ENCODE measurements at regions of chr11 and their contacts with region 1.

Region 1: DNA sequence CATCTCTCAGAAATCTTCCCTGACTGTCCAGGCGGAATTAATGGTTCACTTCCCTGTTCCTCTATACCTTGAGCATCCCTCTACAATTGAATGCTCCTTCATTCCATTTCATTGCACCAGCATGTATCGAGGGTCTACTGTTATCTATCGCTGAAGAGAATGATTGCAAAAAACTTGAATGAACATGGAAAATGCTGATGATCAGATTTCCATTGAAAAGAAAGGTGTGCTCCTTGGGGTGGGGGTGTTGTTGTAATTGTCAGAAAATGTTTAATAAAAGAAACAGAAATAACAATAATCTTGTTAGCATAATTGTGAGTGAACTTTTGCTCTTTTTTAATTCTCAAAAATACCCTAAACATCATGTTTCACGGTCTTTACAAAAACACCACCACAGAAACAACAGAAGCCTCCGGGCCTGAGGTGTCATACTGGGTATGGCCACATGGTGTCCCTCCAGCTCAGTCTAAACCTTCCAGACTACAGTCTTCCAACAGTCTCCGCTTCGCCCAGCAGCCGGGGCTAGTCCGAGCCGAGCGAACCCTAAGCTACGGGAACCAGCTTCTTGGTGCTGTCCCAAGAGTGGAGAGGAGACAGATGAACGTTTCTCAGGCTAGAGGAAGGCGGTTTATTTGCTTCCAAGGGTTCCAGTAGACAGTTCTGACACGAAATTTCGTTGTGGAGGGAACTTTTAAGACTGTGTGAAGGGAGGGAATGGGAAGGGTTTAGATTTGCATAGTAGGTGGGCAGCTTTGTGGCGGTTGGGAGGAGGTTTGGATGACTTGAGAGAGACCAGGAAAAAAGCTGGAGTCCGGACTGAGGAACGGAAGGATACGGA is 75.8 kb upstream of the ZBED5 start:
- DNase-seq: peak; percentile 94
- ATAC-seq: peak; percentile 78
- H3K4me3 Mint-ChIP-seq: peak overlapping the region; percentile 84
- H3K27ac Mint-ChIP-seq: peak overlapping the region; percentile 73
- H3K4me1 Mint-ChIP-seq: peaks cover 20% of the 10 kb centered on the region
- H3K27me3 Mint-ChIP-seq: peaks cover 20% of the 10 kb centered on the region
- CTCF ChIP-seq: peak; percentile 85

Region 2: DNA sequence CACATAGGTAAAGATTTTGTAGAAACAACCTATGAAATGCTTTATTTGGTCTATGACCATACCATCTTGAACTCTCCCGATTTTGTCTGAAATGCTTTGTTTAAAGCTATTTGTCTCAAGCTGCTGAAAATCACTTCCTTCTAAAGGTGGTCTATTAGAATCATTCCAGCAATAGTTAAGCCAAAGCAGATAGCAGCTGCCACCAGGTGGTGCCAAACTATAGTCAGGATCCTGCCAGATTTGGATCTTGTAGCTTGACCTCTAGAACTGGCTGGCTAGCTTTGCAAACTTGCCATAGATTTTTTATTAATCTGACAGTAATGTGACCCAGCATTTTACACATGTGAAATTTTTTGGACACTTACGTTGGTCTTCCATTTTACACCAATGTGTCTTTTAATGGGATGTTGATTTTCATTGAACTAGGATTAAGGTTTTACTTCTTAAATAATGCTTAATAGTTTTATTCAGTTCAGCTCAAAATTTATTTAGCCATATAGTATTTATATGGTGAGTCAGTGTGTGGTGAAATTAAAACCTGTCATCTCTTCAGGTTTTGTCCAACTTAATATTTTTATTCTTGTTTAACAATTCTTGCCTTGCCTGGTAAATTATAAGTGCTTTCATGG is 162.9 kb before region 1 on chr11:
- CTCF ChIA-PET with region 1: interaction called, 13 read pairs
- POLR2A ChIA-PET with region 1: no interaction called
- DNase-seq: peak; percentile 61
- ATAC-seq: peak; percentile 41; the same call in 1 of the 2 replicates
- H3K4me3 Mint-ChIP-seq: no peak overlapping the region
- H3K27ac Mint-ChIP-seq: no peak overlapping the region
- H3K4me1 Mint-ChIP-seq: peaks cover 12% of the 10 kb centered on the region
- H3K27me3 Mint-ChIP-seq: no peaks in the 10 kb centered on the region
- CTCF ChIP-seq: peak; percentile 38

Region 3: GRCh38 chr11:10857709-10858438 is 75.8 kb before region 1 on chr11 and contains the start of gene ZBED5:
- CTCF ChIA-PET with region 1: interaction called, 12 read pairs
- POLR2A ChIA-PET with region 1: interaction called, 16 read pairs
- DNase-seq: peak; percentile 96
- ATAC-seq: peak; percentile 96
- H3K4me3 Mint-ChIP-seq: peak within 1 kb of the TSS; percentile 100
- H3K27ac Mint-ChIP-seq: peak within 1 kb of the TSS; percentile 100
- H3K4me1 Mint-ChIP-seq: peaks cover 30% of the 10 kb centered on the region
- H3K27me3 Mint-ChIP-seq: no peaks in the 10 kb centered on the region
- CTCF ChIP-seq: no peak
- total RNA-seq, gene ZBED5: 44.9 to 49.5 TPM (median 48.7 TPM) in 3 replicates

Region 4: DNA sequence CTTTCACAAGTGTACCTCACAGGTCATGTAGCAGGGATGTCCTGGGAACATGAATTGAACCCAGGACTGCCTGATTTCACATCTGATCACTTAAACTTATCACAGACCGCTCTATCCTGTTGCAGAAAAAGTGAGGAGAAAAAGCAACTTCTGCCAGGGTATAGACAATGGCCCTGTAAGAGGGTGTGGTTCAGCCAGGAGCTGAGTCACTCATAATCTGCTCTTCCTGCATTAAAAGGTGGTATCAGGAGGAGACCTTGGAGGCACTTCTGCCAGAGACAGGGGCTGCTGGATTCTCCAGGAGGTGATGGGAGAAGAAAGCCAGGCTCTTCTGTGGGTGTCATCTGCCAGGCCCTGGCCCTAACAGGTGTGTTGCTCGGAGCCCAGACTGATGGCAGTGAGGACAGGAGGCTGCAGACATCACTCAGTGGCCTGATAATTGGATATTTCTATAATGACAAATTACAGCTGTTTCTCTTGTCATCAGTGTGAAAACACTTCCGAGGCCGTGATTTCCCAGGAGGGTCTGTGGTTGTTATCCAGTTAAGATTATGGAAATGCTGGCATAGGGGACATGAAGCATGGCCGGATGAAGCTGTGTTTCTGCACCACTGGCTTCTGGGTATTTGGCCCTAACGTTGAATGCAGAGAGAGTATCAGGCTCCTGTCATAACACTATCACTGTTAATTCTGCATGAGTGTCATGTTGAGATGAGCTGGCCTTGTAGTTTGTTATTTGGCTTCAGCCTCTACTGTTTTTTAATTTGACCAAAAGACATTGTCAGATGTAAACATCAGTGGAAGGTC is 49.2 kb after region 1 on chr11:
- CTCF ChIA-PET with region 1: interaction called, 12 read pairs
- POLR2A ChIA-PET with region 1: no interaction called
- DNase-seq: no peak
- ATAC-seq: no peak
- H3K4me3 Mint-ChIP-seq: no peak overlapping the region
- H3K27ac Mint-ChIP-seq: no peak overlapping the region
- H3K4me1 Mint-ChIP-seq: peaks cover 6% of the 10 kb centered on the region
- H3K27me3 Mint-ChIP-seq: no peaks in the 10 kb centered on the region; the same call in none of the 2 replicates
- CTCF ChIP-seq: no peak

Region 5: DNA sequence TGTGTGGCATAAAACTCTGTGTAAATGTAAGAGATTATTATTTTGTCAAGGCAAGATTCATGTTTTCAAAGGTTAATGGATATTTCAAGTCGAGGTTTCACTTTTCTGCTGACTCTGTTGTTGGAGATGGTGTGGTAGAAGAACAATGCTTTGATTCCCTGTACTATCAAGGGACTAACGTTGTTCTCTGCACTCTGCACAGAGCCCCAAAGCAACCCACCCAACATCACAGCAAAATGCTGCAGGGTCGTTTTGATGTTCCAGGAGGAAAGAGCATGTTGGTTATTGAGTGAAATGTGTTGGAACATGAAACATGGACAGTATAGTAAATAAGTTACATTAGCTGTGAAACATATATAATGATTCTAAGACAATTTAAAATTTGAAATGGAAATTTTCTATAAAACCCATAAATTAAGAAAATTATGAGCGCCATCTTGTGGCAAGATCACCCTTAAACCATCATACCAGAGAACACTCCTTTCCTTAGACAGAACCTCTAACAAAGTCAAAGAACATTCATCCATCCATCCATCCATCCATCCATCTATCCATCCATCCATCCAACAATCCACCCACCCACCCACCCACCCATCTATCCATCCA is 88.6 kb after region 1 on chr11:
- CTCF ChIA-PET with region 1: interaction called, 150 read pairs
- POLR2A ChIA-PET with region 1: interaction called, 7 read pairs
- DNase-seq: no peak
- ATAC-seq: peak; percentile 47; the same call in 1 of the 2 replicates
- H3K4me3 Mint-ChIP-seq: no peak overlapping the region
- H3K27ac Mint-ChIP-seq: no peak overlapping the region
- H3K4me1 Mint-ChIP-seq: peaks cover 12% of the 10 kb centered on the region
- H3K27me3 Mint-ChIP-seq: no peaks in the 10 kb centered on the region
- CTCF ChIP-seq: no peak

Region 6: GRCh38 chr11:11157185-11157584 is 223.5 kb after region 1 on chr11:
- CTCF ChIA-PET with region 1: interaction called, 20 read pairs
- POLR2A ChIA-PET with region 1: no interaction called
- DNase-seq: peak; percentile 67
- ATAC-seq: peak; percentile 69
- H3K4me3 Mint-ChIP-seq: no peak overlapping the region
- H3K27ac Mint-ChIP-seq: no peak overlapping the region
- H3K4me1 Mint-ChIP-seq: no peaks in the 10 kb centered on the region
- H3K27me3 Mint-ChIP-seq: peaks cover 7% of the 10 kb centered on the region; the same call in 1 of the 2 replicates
- CTCF ChIP-seq: no peak

Measured in WTC11 (cell line).